Panc1 (cell line): ENCODE measurements at regions of chr17 and their contacts with region 1.

Region 1: GRCh38 chr17:80268427-80268826 is 7.8 kb downstream of the RNF213 start:
- DNase-seq: no peak
- ATAC-seq: no peak
- H3K4me3 ChIP-seq: no peak overlapping the region
- H3K27ac ChIP-seq: no peak overlapping the region
- H3K4me1 ChIP-seq: peaks cover 7% of the 10 kb centered on the region
- H3K27me3 ChIP-seq: no peaks in the 10 kb centered on the region
- CTCF ChIP-seq: no peak

Region 2: GRCh38 chr17:80124351-80124981 is 144.0 kb before region 1 on chr17:
- CTCF ChIA-PET with region 1: no interaction called
- POLR2A ChIA-PET with region 1: no interaction called
- in situ Hi-C with region 1: no loop called
- intact Hi-C with region 1: no loop called
- DNase-seq: no peak
- ATAC-seq: peak; percentile 84
- H3K4me3 ChIP-seq: no peak overlapping the region
- H3K27ac ChIP-seq: no peak overlapping the region
- H3K4me1 ChIP-seq: 0 out of 2 replicates have a peak, but pooled peaks cover 3% of the 10 kb centered on the region
- H3K27me3 ChIP-seq: no peaks in the 10 kb centered on the region
- CTCF ChIP-seq: peak; percentile 34; the same call in 1 of the 2 replicates

Region 3: DNA sequence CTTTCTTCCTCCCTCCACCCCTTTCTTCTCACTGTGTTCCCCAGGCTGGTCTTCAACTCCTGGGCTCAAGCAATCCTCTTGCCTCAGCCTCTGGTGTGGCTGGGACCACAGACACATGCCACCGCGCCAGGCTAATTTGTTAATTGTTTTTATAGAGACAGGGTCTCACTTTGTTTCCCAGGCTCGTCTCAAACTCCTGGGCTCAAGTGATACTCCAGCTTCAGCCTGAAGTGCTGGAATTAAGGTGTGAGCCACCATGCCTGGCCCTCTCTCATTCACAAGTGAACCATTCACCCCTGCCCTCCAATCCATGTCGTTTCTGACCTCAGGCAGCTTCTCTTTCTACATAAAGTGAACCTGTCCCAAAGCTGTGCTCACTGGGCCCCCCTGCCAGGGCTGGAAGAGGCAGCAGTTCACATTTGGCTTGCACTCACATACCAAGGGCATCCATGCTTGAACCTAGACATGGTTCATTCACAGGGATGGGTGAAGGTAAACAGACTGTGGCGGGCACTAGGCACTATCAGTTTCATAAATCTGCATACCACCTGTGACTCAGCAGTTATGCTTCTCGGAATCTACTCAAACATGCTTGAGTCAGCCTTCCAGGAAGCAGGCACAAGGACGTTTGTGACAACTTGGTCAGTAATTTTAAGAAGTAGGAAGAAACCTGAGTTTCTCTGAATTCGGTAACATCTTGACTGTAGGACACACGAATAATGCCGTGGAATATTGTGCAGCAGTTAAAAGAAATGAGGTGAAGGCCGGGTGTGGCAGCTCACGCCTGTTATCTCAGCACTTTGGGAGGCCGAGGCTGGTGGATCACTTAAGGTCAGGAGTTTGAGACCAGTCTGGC is 13.8 kb before region 1 on chr17:
- CTCF ChIA-PET with region 1: no interaction called
- POLR2A ChIA-PET with region 1: interaction called, 19 read pairs
- in situ Hi-C with region 1: no loop called
- intact Hi-C with region 1: no loop called
- DNase-seq: peak; percentile 80
- ATAC-seq: peak; percentile 90
- H3K4me3 ChIP-seq: peak overlapping the region in 1 of 2 experiments; percentile 31; a peak in 2 of 4 replicates
- H3K27ac ChIP-seq: peak overlapping the region; percentile 98
- H3K4me1 ChIP-seq: peaks cover 64% of the 10 kb centered on the region
- H3K27me3 ChIP-seq: no peaks in the 10 kb centered on the region
- CTCF ChIP-seq: no peak